ENCODE measurements at regions of chr1 and their contacts with region 1.

Region 1: DNA sequence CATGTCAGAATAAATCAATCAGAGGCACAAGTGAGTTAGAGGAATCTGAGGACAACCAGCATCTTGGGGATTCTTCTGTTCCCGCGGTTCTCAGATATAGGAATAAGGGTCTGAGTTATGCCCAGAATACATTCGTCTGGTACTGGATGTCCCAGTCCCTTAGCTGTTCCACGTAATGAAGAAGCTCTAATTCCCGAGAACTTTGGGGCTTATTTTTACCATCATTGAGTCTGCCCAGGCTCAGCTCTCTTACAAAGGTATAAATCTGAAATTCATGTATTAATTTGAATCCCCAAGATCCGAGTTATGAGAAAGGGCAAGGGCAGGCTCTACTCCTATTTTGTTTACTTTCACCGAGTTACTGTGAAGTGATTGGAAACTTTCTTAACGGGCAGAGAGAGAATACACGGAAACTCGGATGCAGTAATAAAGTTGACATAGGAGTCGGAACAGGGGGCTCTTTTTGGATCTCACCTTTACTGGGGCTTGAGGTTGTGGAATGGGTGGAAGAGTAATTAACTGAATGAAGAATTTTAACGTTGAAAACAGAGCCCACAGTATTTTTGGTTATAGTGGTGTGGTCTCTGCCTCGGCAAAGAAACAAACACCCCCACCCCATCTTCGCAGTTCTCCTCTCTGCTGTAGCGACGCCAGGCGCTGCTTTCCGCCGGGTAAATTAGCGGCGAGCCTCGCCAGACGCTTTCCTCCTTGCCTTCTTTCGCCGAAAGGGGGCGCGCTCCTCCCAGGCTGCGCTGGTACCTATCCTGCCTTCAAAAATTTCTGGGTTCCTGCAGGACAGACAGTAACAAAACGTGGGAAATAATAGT is 7.1 kb downstream of the PRRX1 start:
- DNase-seq: peak; percentile 59
- ATAC-seq: peak; percentile 42 to 45

Region 2: GRCh38 chr1:169928438-169929209 is 742.4 kb before region 1 on chr1:
- intact Hi-C with region 1: loop called in 1 of 2 experiments (anchors 10 kb)
- DNase-seq: no peak
- ATAC-seq: peak in 1 of 2 donors; percentile 53

Region 3: DNA sequence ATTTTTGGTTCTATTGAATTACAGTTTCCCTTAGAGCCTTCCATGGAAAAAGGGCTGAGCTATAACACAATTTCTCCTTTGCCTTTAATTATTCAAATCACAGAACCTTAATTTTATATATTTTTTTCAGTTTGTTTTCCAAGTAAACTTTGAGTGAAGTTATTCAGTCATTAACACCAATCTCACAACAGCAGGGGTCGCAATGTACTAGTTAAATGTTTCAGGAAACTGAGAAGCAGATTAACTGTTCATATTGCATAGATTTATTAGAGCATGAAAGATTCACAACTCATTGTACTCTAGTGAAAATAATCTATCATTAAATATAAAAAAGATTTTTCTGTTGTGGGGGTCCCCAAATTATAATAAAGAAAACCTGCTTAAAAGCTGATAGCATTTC is 660.6 kb before region 1 on chr1:
- intact Hi-C with region 1: loop called in 1 of 2 experiments (anchors 10 kb)
- DNase-seq: peak; percentile 25
- ATAC-seq: no peak

Region 4: DNA sequence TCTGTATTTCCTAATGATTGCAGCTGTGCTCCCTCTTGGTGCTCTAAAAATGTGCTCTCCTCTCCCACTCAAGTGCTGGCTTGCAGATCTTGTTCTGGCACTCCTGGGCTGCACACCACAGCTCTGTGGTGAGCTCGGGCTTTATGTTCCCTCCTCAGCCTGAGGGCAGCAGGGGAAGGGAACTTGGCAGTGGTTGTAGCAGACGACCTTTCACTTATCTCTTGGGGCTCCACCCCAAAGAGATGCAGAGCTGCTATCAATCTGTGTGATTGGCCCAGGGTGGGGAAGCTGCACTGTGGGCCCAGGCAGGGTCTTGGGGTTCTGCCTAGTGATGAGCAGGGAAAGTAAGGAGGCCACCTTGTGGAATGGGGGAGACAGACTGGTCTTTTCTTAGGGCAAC is 282.5 kb before region 1 on chr1:
- intact Hi-C with region 1: no loop called
- DNase-seq: no peak
- ATAC-seq: no peak

Region 5: GRCh38 chr1:170576980-170577379 is 94.0 kb before region 1 on chr1:
- intact Hi-C with region 1: no loop called
- DNase-seq: no peak
- ATAC-seq: no peak

Region 6: DNA sequence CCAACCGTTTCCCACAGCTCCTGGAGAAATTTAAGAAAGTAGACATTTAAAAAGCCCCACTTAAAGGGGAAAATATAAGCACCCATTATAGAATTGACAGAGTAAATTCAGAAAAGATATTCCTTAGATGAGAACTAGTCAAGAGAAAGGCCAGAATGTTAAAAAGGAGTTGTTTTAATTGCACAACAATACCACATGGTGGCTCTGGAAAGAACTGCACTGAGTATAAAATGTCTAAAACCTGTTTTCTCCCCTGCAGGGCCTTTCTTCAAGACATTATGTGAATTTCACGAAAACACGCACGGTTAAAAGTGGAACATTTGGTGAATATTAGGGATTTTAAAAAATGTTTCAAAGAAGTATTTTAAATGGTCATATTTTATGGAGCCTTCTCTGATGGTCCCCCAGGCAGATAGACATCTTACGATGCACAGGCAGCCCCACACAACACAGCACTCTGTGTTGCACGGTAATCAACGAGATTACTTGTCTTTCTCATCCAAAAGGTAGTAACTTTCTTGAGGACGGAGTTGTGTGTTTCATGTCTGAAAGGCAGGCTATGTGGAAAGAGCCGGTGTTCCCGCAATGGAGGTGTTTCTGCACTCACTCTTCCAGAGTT is 94.8 kb after region 1 on chr1:
- intact Hi-C with region 1: loop called in 1 of 2 experiments (anchors 5 kb)
- DNase-seq: no peak
- ATAC-seq: peak; percentile 45 to 79

Region 7: DNA sequence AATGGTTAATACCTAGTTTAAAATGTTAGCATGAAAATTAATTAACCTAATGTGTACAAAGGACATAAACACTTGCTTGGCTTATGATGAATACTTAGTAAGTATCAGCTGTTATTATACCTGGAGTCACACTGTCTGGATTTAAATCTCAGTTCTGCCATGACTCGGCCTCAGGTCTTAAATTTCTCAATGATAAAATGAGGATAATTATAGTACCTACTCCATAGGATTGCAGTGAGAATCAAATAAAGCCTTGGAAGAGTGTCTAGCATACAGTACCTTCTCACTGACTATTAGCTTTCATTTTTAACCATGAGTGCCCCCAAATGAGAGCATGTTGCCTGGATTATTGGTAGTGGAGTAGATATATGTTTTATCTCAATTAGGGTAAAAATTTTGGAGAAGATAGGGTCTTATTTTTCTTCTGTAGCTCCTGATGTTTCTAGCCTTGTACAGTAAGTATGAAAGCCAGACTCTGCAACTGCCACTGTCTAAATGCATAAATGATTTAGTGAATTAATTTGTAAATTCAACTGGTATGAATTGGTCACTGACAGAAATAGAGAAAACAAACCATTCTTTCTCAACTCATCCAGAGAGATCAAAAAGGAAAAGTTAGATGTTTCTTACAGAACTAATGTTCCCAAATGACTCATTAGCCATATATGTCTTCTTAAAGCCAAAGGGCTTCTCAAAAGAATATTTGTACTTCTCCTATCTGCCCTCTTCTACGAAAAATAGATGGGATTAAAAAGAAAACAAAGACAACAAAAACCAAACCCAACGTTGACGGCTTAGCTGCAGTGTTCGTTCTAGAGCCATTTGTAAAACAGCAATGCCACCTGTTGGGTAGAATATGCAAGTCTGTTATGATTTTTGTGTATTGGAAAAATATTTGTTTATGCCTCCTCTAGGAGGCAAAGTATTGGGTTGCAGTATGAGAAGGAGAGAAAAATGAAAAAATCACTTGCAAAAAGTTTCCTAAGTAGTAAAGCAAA is 210.6 kb after region 1 on chr1:
- intact Hi-C with region 1: loop called in 1 of 2 experiments (anchors 5 kb)
- DNase-seq: no peak
- ATAC-seq: peak; percentile 42 to 78